Panc1 (cell line): ENCODE measurements at regions of chr9 and their contacts with region 1.

Region 1: DNA sequence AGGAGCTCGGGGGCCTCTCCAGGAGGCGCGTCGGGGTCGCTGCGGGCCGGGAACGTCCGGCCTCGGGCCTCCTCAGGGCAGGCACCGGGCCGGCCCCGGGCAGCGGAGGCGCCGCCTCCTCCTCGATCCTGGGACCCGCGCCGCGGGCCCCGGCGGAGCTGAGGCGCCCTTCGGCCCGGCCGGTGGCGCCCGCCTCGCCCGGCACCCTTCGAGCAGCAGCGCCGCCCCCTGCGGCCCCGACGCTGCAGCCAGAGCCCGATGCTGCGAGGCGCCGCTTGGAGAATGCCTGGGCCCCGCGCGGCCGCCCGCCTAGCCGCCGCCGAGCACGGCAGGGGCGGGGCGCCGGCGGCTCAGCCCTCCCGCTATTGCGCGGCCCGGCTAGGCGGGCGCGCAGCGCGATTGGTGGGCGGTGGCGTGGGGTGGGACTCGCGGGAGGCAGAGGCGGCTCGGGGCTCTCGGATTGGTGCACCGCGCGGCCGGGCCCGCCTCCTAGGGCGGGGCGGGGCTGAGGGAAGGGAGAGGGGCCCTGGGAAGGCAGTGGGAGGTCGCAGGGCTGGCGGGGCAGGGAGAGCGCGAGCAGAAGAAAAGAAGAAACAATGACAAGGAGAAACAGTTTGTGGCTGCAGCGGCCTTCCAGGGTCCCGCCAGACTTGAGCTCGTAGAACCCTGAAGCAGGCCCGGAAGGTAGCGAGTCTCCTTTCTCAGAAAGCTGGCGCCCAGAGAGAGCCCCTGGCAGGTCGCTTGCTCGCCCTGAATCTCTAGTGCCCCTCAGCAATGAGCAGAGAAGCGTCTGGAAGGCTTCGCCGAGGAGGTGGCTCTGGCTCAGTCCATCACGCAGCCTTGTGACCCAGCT is at the start of gene EEIG1:
- DNase-seq: no peak
- ATAC-seq: peak; percentile 88
- H3K4me3 ChIP-seq: peak within 1 kb of the TSS; percentile 94 to 98
- H3K27ac ChIP-seq: peak within 1 kb of the TSS; percentile 97
- H3K4me1 ChIP-seq: peaks cover 34% of the 10 kb centered on the region
- H3K27me3 ChIP-seq: no peaks in the 10 kb centered on the region
- CTCF ChIP-seq: no peak
- total RNA-seq, gene EEIG1: 361 TPM

Region 2: DNA sequence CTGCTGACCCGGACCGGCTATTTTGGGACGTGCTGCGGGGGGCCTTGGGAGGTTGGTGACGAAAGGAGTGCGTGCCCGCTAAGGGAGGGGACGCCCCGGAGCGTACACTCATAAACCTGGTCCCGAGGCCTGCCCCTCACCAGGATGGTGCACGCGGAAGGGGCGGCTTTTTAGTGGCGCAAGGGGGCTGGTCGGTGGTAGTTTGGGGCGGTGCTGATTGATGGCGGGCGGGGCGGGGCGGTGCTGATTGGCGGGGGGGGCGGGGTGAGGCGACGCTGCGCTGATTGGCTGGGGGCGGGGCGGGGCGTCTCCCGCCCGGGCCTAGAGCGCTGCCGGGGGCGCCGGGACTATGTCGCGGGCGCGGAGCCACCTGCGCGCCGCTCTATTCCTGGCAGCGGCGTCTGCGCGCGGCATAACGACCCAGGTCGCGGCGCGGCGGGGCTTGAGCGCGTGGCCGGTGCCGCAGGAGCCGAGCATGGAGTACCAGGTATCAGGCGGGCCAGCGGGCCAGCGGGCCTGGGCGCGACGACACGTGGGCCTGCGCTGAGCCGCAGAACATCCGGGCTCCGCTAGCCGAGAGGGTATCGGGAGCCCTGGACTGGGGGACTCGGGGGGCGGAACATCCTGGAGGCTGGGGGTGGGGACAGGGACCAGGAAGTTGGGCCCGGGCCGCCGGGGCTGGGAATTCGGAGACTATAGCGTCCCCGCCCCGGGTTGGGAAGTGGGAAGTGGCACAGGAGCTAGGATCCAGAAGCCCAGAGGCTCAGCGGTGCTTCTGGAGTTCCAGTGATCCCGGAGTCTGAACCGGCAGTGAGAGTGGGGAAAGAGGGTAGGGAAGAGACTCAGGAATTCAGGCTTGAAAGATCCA is 178.1 kb before region 1 on chr9 and contains the start of gene FPGS:
- CTCF ChIA-PET with region 1: no interaction called
- POLR2A ChIA-PET with region 1: no interaction called
- in situ Hi-C with region 1: no loop called
- intact Hi-C with region 1: no loop called
- DNase-seq: no peak
- ATAC-seq: peak; percentile 92
- H3K4me3 ChIP-seq: peak within 1 kb of the TSS; percentile 80 to 81
- H3K27ac ChIP-seq: peak within 1 kb of the TSS; percentile 91
- H3K4me1 ChIP-seq: peaks cover 12% of the 10 kb centered on the region
- H3K27me3 ChIP-seq: no peaks in the 10 kb centered on the region
- CTCF ChIP-seq: no peak
- total RNA-seq, gene FPGS: 56.5 TPM

Region 3: GRCh38 chr9:127943731-127944144 is 37.2 kb before region 1 on chr9:
- CTCF ChIA-PET with region 1: no interaction called
- POLR2A ChIA-PET with region 1: no interaction called
- in situ Hi-C with region 1: no loop called
- intact Hi-C with region 1: loop called (anchors 5 kb)
- DNase-seq: no peak
- ATAC-seq: peak; percentile 69
- H3K4me3 ChIP-seq: no peak overlapping the region
- H3K27ac ChIP-seq: peak overlapping the region; percentile 57
- H3K4me1 ChIP-seq: peaks cover 83% of the 10 kb centered on the region
- H3K27me3 ChIP-seq: no peaks in the 10 kb centered on the region
- CTCF ChIP-seq: peak; percentile 86

Region 4: DNA sequence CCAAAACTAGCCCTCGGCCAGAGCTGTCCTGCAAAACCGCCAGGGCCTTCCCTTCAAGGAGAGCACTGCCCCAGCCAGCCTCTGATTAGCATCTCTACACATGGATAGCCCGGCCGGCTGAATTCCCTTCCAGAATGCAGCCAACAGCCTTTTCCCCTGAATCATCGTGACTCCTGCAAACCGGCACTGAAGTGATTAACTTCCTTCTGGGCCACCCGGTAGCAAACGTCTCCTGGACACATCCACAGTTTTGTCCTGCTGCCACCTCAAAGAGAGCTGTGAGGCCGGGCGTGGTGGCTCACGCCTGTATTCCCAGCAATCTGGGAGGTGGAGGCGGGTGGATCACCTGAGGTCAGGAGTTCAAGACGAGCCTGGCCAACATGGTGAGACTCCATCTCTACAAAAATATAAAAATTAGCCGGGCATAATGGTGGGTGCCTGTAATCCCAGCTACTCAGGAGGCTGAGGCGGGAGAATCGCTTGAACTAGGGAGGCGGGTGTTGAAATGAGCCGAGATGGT is 20.9 kb after region 1 on chr9:
- CTCF ChIA-PET with region 1: interaction called, 3 read pairs
- POLR2A ChIA-PET with region 1: interaction called, 11 read pairs
- in situ Hi-C with region 1: no loop called
- intact Hi-C with region 1: no loop called
- DNase-seq: no peak
- ATAC-seq: peak; percentile 91
- H3K4me3 ChIP-seq: peak overlapping the region in 1 of 2 experiments; percentile 32; a peak in 2 of 4 replicates
- H3K27ac ChIP-seq: peak overlapping the region; percentile 89
- H3K4me1 ChIP-seq: peaks cover 26% of the 10 kb centered on the region
- H3K27me3 ChIP-seq: no peaks in the 10 kb centered on the region
- CTCF ChIP-seq: no peak

Region 5: DNA sequence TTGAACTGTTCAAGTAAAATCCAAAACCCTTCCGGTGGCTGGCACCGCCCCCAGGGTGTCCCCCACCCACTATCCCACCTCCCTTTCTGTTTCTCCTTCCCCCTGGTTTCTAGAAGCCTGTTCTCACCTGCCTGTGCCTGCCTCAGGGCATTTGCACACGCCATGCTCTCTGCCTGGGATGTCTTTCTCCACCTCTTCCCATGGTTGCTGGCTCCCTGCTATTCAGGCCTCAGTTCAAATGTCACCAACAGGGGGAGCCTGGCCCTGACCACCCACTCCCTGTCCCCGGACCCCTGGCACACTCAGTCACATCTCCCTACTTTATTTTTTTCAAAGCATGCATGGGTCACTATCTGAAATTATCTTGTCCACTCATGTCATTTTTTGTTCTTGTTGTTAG is 39.8 kb after region 1 on chr9:
- CTCF ChIA-PET with region 1: no interaction called
- POLR2A ChIA-PET with region 1: interaction called, 18 read pairs
- in situ Hi-C with region 1: no loop called
- intact Hi-C with region 1: no loop called
- DNase-seq: no peak
- ATAC-seq: peak; percentile 33; the same call in 1 of the 2 replicates
- H3K4me3 ChIP-seq: no peak overlapping the region
- H3K27ac ChIP-seq: peak overlapping the region; percentile 68
- H3K4me1 ChIP-seq: peaks cover 36% of the 10 kb centered on the region
- H3K27me3 ChIP-seq: no peaks in the 10 kb centered on the region
- CTCF ChIP-seq: no peak; the same call in 1 of the 2 replicates

Region 6: GRCh38 chr9:128026773-128027541 is 46.0 kb after region 1 on chr9:
- CTCF ChIA-PET with region 1: no interaction called
- POLR2A ChIA-PET with region 1: interaction called, 11 read pairs
- in situ Hi-C with region 1: no loop called
- intact Hi-C with region 1: no loop called
- DNase-seq: no peak
- ATAC-seq: peak; percentile 61
- H3K4me3 ChIP-seq: no peak overlapping the region
- H3K27ac ChIP-seq: peak overlapping the region; percentile 85
- H3K4me1 ChIP-seq: peaks cover 46% of the 10 kb centered on the region
- H3K27me3 ChIP-seq: no peaks in the 10 kb centered on the region
- CTCF ChIP-seq: no peak